ENCODE measurements at regions of chr20 and their contacts with region 1.

Region 1: GRCh38 chr20:13105864-13106457 is 97.2 kb downstream of the SPTLC3 start:
- DNase-seq: no peak
- H3K4me3 ChIP-seq: no peak overlapping the region
- H3K27ac ChIP-seq: no peak overlapping the region
- H3K4me1 ChIP-seq: peaks cover 0 to 24% (median 0%) of the 10 kb centered on the region in 3 donors
- H3K27me3 ChIP-seq: no peaks in the 10 kb centered on the region
- CTCF ChIP-seq: peak; percentile 31 to 74 (median 44)
- POLR2A ChIP-seq: no peak

Region 2: DNA sequence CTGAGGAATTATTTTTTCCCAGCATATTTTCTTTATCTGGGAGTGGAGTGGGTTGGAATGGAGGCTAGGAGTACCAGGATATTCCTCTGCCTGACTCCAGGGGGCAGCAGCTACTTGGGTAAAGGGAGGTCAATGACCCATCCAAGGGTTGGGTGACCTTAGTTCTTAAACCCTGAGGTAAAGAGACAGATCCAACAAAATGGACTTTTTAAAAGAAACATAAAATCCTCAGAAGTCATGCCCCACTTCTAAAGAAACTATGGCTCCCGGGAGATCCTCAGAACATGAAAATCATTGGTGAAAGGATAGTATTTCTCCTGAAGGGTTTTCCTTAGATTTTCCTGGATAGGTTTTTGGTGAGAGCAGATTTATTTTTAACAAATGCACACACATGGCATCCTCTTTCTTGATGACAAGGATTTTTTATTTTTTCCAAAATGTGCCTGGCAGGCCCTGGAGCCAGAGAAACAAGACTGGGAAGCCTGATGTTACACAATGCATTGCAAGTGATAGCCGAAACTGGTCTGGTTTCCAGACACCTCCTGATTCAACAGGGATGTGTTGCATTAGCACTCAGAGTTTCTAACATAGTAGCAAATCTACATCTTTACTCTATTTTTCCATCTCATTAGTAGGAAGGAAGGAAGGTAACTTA is 1429.2 kb before region 1 on chr20:
- intact Hi-C with region 1: loop called (anchors 10 kb)
- DNase-seq: no peak
- H3K4me3 ChIP-seq: no peak overlapping the region
- H3K27ac ChIP-seq: no peak overlapping the region
- H3K4me1 ChIP-seq: peaks cover 0 to 8% (median 6%) of the 10 kb centered on the region in 3 donors
- H3K27me3 ChIP-seq: no peaks in the 10 kb centered on the region
- CTCF ChIP-seq: peak in 5 of 6 experiments; percentile 63 to 85 (median 71)
- POLR2A ChIP-seq: no peak

Region 3: DNA sequence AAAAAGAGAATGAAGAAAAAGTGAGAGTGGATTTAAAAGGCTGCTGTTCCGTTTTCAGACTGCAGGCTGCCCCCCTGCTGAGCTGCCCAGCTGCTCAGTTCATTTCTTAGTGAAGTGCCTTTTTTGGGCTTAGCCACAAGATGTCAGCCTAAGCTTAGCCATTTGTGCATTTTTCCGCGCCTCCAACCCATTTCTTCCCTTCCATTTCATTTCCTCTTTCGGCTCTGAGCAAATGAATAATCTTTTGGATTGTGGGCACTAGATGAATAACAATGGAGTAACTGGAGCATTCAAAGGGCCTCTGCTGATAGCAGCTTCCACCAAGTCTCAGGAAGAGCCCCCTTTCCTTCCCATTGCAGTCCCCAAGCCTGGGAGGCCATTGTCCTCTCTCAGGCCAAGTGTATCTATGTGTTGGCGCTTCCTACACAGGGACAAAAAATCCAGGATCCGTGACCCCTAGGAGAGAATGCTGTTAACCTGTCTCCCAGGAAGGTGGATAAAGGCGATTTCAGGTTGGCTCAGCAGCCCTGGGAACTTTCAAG is 180.7 kb before region 1 on chr20:
- intact Hi-C with region 1: loop called (anchors 5 kb)
- DNase-seq: no peak
- H3K4me3 ChIP-seq: no peak overlapping the region
- H3K27ac ChIP-seq: no peak overlapping the region
- H3K4me1 ChIP-seq: peaks cover 0 to 5% (median 0%) of the 10 kb centered on the region in 3 donors
- H3K27me3 ChIP-seq: no peaks in the 10 kb centered on the region
- CTCF ChIP-seq: peak; percentile 37 to 83 (median 68)
- POLR2A ChIP-seq: no peak

Region 4: DNA sequence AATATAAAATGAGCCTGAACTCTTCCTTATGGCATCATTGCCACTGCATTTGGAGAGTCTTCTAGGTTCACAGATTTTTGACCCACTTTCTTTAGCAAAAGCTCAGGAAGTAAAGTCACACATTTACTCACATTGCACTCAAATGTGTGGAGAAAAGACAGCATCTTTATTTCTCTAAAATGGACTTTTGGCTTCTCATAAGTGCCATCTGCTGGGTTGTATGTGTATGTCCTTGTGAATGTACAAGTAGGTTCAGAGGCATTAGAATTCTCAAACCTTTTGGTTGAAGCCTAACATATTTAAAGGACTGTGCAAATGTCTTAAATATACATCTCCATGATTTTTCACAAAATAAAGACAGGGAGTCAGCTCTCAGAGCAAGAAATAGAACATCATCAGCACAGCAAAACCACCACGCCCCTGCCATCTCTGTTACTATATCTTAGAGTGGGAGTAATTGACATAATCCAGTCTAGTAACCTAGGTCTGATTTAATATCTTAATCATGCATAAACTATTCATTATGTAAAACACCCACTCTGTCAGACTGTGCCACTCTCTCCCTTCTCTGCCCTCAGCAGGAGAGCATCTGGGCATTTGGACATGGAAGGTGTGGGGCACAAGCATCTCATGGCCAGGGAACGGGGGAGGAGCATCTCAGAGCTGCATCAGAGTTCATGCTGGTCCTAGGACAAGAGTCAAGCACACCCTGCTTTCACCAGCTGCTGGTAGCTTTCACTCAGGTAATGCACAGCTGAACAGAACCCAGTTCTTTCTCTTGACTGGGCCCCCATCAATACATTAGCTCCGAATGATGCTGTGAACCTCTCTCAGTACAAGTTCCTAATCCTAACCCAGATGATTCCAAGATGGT is 139.3 kb before region 1 on chr20:
- intact Hi-C with region 1: loop called (anchors 5 kb)
- DNase-seq: no peak
- H3K4me3 ChIP-seq: no peak overlapping the region
- H3K27ac ChIP-seq: no peak overlapping the region
- H3K4me1 ChIP-seq: no peaks in the 10 kb centered on the region
- H3K27me3 ChIP-seq: no peaks in the 10 kb centered on the region
- CTCF ChIP-seq: peak in 1 of 6 experiments; percentile 31
- POLR2A ChIP-seq: no peak

Region 5: GRCh38 chr20:13312300-13312699 is 206.3 kb after region 1 on chr20:
- intact Hi-C with region 1: no loop called
- DNase-seq: no peak
- H3K4me3 ChIP-seq: no peak overlapping the region
- H3K27ac ChIP-seq: no peak overlapping the region
- H3K4me1 ChIP-seq: no peaks in the 10 kb centered on the region
- H3K27me3 ChIP-seq: no peaks in the 10 kb centered on the region
- CTCF ChIP-seq: no peak
- POLR2A ChIP-seq: no peak